Panc1 (cell line): ENCODE measurements at regions of chr10 and their contacts with region 1.

Region 1: DNA sequence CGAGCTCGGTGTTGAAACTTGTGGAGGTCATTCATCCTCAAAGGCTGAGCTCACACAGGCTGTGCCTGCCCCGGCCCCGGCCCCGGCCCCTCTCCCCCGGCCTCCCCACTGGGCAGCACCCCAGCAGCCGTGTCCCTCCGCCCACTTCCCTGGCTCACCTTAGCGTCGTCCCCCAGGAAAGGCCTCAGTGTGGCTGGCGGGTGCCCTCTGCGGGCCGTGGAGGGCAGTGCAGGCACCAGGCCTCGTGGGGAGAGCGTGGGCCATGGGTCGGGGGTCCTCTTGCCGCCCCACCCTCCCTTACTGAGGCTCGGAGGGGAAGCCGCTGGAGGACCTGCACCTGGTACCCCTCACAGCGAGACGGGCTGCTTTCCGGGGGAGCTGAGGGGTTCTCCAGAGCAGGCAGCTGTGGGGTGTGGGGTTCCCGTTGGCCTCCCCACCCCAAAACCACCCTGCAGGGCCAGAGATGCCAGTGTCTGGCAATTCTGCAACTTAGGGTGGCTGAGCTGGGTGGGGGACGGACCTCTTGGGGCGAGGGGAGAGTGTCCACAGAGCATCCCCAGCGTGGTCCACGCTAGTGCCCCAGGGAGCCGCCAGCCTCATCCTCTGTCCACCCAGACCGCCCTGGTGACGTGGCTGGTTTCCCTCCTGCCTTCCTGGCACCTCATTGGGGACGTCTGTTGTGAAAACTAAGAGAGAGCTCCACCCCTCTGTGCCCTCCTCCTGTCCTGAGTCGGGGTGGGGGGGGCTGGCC is 44.2 kb upstream of the DPYSL4 start:
- DNase-seq: no peak
- ATAC-seq: peak; percentile 87
- H3K4me3 ChIP-seq: no peak overlapping the region
- H3K27ac ChIP-seq: no peak overlapping the region
- H3K4me1 ChIP-seq: no peaks in the 10 kb centered on the region
- H3K27me3 ChIP-seq: no peaks in the 10 kb centered on the region
- CTCF ChIP-seq: peak; percentile 99

Region 2: GRCh38 chr10:131982796-131983195 is 159.8 kb before region 1 on chr10:
- CTCF ChIA-PET with region 1: interaction called, 10 read pairs
- POLR2A ChIA-PET with region 1: no interaction called
- in situ Hi-C with region 1: no loop called
- intact Hi-C with region 1: no loop called
- DNase-seq: no peak
- ATAC-seq: no peak
- H3K4me3 ChIP-seq: peak overlapping the region; percentile 52 to 79
- H3K27ac ChIP-seq: peak overlapping the region; percentile 52; the same call in 1 of the 2 replicates
- H3K4me1 ChIP-seq: peaks cover 22% of the 10 kb centered on the region
- H3K27me3 ChIP-seq: no peaks in the 10 kb centered on the region
- CTCF ChIP-seq: no peak

Region 3: GRCh38 chr10:132048294-132048667 is 94.3 kb before region 1 on chr10:
- CTCF ChIA-PET with region 1: no interaction called
- POLR2A ChIA-PET with region 1: interaction called, 16 read pairs
- in situ Hi-C with region 1: no loop called
- intact Hi-C with region 1: no loop called
- DNase-seq: no peak
- ATAC-seq: no peak
- H3K4me3 ChIP-seq: no peak overlapping the region
- H3K27ac ChIP-seq: no peak overlapping the region
- H3K4me1 ChIP-seq: no peaks in the 10 kb centered on the region
- H3K27me3 ChIP-seq: peaks cover 6% of the 10 kb centered on the region
- CTCF ChIP-seq: no peak